ENCODE measurements at regions of chr15 and their contacts with region 1.

Region 1: DNA sequence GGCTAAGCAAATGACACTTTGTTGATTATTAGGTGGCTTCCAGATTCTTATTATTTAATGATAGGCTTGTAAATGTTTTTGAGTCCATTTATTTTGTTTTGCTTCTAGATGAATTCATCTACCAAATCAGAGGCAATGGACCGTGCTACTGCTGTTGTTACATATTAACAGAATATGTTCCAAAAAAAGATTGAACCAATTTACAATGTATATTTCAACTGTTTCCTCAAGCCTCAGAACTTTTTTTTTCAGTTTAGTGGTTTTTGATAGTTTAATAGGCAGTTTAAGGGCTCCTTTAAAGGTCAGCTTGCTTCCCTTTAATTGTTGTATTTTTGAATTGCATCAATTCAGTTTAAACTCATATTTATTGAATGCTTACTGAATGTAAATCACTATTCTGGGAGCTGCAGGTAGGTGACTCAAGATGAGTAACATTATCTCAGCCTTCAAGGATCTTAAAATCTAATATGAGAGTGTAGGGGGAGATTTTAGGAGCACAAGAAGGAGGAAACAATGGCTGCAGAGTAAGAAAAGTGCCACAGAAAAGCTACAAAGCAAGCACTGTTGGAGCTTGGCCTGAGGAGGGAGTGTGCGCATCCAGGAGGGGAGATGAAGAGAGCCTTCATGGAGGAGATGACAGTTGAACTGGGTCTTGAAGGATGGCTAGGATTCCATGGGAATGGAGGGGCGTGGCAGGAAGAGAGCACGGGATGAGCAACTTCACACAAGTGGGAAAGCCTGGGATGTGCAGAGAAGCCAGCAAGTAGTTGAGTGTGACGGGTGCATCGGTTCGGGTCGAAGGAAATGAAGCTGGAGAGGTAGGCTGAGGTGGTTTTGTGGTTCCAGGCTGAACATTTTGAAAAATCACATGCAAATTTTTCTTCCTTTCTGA is 14.7 kb downstream of the MAP2K1 start:
- DNase-seq: no peak
- ATAC-seq: no peak
- H3K4me3 ChIP-seq: no peak overlapping the region
- H3K27ac ChIP-seq: no peak overlapping the region
- H3K4me1 ChIP-seq: peaks cover 9 to 63% (median 28%) of the 10 kb centered on the region in 9 donors
- H3K27me3 ChIP-seq: no peaks in the 10 kb centered on the region
- CTCF ChIP-seq: no peak

Region 2: DNA sequence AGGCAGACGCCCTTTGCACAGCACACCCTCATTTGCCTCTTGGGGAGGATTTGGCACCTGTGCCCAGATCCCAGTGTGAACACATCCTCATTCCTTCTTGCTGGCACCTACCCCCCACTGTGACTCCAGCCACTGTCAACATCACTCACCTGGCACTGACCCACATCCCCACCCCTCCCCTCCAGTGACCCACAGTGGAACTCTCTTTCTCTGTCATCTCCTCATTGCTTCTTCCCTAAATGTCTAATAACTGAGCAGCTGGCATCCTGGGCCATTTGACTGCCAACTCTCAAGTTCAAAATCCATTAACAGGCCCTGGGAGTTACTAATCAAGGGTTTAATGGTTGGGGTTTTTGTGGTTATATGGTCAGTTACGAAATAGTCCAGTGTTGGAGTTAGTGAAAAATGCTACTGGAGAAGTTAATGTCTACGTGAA is 81.8 kb after region 1 on chr15:
- intact Hi-C with region 1: loop called in 1 of 10 experiments (anchors 10 kb)
- DNase-seq: no peak
- ATAC-seq: peak in 3 of 8 donors; percentile 15 to 76 (median 54)
- H3K4me3 ChIP-seq: no peak overlapping the region
- H3K27ac ChIP-seq: no peak overlapping the region
- H3K4me1 ChIP-seq: peaks cover 0 to 14% (median 0%) of the 10 kb centered on the region in 9 donors
- H3K27me3 ChIP-seq: no peaks in the 10 kb centered on the region
- CTCF ChIP-seq: no peak